Left cardiac atrium (tissue), 4 donors: ENCODE measurements at regions of chr9 and their contacts with region 1.

Region 1: DNA sequence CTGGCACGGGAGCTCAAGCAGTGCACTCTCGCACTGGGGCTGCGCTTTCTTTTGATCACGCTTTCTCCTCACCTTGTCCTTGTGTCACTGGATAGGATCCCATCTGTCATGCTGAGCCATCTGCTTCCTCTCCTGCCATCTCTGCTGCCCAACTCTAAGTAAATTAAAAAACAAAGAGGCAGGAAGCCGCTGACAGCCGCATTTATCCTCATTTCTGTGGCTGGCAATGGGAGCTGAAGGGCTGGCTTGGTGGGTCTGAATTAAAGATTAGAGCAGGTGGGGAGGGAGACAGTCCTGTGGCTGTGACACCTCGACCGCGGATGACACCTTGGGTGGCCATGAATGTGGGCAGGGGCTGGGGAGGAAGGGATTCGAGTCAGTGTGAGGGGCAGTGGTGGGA is 159.2 kb upstream of the ALDH1B1 start:
- DNase-seq: no peak
- ATAC-seq: no peak

Region 2: DNA sequence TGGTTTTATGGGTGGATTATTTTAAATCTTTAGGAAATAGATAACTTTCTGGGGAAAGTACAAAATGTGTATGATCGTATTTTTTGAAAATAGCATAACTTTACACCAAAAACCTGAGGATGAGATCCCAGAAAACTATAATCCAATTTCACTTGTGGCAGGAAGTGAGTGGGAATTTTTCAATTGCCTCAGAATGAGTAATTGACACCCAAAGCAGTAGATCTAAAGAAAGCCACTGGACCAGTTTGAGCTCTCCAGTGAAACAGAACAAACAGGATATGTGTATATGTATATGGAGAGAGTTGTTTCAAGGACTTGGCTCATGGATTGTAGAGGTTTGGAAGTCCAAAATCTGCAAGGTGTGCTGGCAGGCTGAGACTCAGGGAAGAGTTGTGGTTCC is 55.1 kb before region 1 on chr9:
- intact Hi-C with region 1: loop called in 1 of 2 experiments (anchors 10 kb)
- DNase-seq: no peak
- ATAC-seq: no peak

Region 3: DNA sequence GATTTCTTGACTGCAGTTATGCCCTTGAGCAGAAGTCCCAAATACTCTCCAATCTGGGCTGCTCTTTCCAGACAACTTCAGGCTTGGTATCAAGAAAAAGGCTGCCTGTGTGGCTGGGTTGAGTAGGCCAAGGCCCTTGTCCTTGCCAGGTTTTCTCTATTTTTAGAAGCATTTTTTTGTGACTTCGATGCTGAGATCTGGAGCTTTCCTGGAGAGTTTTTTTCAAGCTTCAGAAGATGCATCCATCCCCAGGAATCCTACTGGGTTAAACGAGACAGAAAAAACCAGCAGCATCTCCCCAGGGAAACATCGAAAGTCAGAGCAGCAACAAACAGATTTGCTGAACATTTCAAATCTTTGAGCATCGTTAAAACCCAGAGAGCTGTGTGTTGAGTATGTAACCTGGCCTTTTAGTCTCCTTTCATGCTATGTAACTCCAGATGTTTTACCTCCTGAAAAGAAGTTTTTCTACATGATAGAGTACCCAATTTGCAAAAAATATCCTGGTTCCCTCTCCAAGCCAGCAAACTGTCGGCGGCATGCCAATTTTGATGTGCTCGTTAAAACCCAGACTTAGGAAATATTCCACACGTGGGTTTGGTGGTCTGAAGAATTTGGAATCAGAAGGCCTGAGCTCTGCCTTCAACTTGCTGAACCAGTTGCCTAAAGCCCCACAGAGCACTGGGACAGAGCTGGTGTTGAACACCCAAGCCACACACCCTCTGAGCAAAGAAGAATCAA is 61.0 kb after region 1 on chr9:
- intact Hi-C with region 1: loop called in 1 of 2 experiments (anchors 10 kb)
- DNase-seq: no peak
- ATAC-seq: peak in 1 of 2 donors; percentile 53